WTC11 (cell line): ENCODE measurements at regions of chr5 and their contacts with region 1.

Region 1: DNA sequence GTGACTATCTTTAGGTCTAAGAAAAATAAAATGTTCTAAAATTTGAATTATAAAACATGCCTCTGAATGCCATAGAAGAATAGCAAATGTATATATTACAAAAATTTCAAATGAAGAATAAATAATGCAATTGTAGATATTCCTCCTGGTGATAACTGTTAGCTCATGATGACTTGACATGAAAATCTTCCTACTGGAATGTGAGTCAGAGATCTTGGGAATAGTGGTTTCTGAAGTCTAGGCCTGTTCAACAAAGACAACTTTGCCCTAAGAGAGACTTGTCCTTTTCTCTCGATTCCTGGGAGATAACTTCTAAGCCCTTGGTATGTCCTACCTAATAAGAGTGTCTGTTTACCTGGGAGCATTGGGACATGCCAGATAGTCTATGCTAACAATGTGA is 746.3 kb upstream of the RIOK2 start:
- DNase-seq: no peak
- ATAC-seq: no peak
- H3K4me3 Mint-ChIP-seq: no peak overlapping the region
- H3K27ac Mint-ChIP-seq: no peak overlapping the region
- H3K4me1 Mint-ChIP-seq: no peaks in the 10 kb centered on the region
- H3K27me3 Mint-ChIP-seq: no peaks in the 10 kb centered on the region
- CTCF ChIP-seq: no peak

Region 2: DNA sequence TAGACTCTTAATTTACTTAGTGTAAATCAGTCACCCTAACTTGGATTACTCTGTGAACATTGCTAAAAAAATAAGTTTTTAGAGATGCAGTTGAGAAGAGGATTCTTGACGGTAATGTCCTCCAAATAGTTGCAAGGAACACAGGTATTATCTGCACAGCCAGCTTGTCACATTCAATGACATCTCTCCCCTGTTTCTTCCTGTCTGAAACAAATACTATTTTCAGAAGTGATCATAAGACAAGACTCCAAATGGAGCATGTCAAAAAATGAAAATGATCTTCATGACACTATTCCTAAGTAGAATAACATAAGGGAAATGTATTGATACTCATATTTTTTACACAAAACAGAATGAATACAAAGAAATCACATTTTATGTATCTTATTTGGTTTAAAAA is 1227.3 kb after region 1 on chr5:
- CTCF ChIA-PET with region 1: no interaction called
- POLR2A ChIA-PET with region 1: interaction called, 10 read pairs
- DNase-seq: no peak
- ATAC-seq: no peak
- H3K4me3 Mint-ChIP-seq: no peak overlapping the region
- H3K27ac Mint-ChIP-seq: no peak overlapping the region
- H3K4me1 Mint-ChIP-seq: no peaks in the 10 kb centered on the region
- H3K27me3 Mint-ChIP-seq: no peaks in the 10 kb centered on the region
- CTCF ChIP-seq: no peak